ENCODE measurements at regions of chr2 and their contacts with region 1.

Region 1: GRCh38 chr2:207710814-207711740 is at the start of gene CCNYL1:
- DNase-seq: peak; percentile 99
- ATAC-seq: peak; percentile 98
- H3K4me3 ChIP-seq: peak within 1 kb of the TSS; percentile 87
- H3K27ac ChIP-seq: peak within 1 kb of the TSS; percentile 75
- H3K4me1 ChIP-seq: no peaks in the 10 kb centered on the region
- H3K27me3 ChIP-seq: no peaks in the 10 kb centered on the region
- CTCF ChIP-seq: 0 out of 2 replicates have a peak, but pooled peaks have one; percentile 10
- POLR2A ChIP-seq: peak; percentile 90
- RAD21 ChIP-seq: no peak
- total RNA-seq, gene CCNYL1: 5.4 and 6.7 TPM in 2 replicates

Region 2: GRCh38 chr2:207516206-207516605 is 194.9 kb before region 1 on chr2:
- CTCF ChIA-PET with region 1: no interaction called
- POLR2A ChIA-PET with region 1: no interaction called
- dilution Hi-C with region 1: no loop called
- in situ Hi-C with region 1: no loop called
- intact Hi-C with region 1: no loop called
- DNase-seq: no peak
- ATAC-seq: no peak
- H3K4me3 ChIP-seq: no peak overlapping the region
- H3K27ac ChIP-seq: no peak overlapping the region
- H3K4me1 ChIP-seq: peaks cover 10% of the 10 kb centered on the region
- H3K27me3 ChIP-seq: no peaks in the 10 kb centered on the region
- CTCF ChIP-seq: no peak
- POLR2A ChIP-seq: no peak
- RAD21 ChIP-seq: no peak

Region 3: DNA sequence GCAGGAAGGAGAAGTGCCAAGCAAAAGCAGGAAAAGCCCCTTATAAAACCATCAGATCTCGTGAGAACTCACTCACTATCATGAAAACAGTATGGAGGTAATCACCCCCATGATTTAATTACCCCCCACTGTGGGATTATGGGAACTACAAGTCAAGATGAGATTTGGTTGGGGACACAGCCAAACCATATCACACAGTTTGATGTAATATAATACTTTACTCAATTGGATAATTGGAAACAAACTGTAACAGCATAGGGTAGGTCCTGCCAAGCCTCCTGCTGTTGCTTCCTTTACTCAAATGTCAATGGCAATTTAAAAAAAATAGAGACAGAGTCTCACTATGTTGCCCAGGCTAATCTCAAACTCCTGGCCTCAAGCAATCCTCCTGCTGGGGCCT is 70.4 kb before region 1 on chr2:
- CTCF ChIA-PET with region 1: no interaction called
- POLR2A ChIA-PET with region 1: no interaction called
- dilution Hi-C with region 1: no loop called
- in situ Hi-C with region 1: no loop called
- intact Hi-C with region 1: no loop called
- DNase-seq: no peak
- ATAC-seq: no peak
- H3K4me3 ChIP-seq: no peak overlapping the region
- H3K27ac ChIP-seq: no peak overlapping the region
- H3K4me1 ChIP-seq: no peaks in the 10 kb centered on the region
- H3K27me3 ChIP-seq: peaks cover 3% of the 10 kb centered on the region; the same call in 1 of the 2 replicates
- CTCF ChIP-seq: no peak
- POLR2A ChIP-seq: no peak
- RAD21 ChIP-seq: no peak

Region 4: GRCh38 chr2:207676827-207677354 is 34.2 kb before region 1 on chr2:
- CTCF ChIA-PET with region 1: no interaction called
- POLR2A ChIA-PET with region 1: no interaction called
- dilution Hi-C with region 1: no loop called
- in situ Hi-C with region 1: no loop called
- intact Hi-C with region 1: loop called (anchors 5 kb)
- DNase-seq: peak; percentile 91
- ATAC-seq: peak; percentile 93
- H3K4me3 ChIP-seq: no peak overlapping the region
- H3K27ac ChIP-seq: peak overlapping the region; percentile 55; the same call in 1 of the 2 replicates
- H3K4me1 ChIP-seq: peaks cover 4% of the 10 kb centered on the region
- H3K27me3 ChIP-seq: no peaks in the 10 kb centered on the region
- CTCF ChIP-seq: no peak
- POLR2A ChIP-seq: no peak
- RAD21 ChIP-seq: no peak